B cell (primary cell): ENCODE measurements at regions of chr21 and their contacts with region 1.

Region 1: DNA sequence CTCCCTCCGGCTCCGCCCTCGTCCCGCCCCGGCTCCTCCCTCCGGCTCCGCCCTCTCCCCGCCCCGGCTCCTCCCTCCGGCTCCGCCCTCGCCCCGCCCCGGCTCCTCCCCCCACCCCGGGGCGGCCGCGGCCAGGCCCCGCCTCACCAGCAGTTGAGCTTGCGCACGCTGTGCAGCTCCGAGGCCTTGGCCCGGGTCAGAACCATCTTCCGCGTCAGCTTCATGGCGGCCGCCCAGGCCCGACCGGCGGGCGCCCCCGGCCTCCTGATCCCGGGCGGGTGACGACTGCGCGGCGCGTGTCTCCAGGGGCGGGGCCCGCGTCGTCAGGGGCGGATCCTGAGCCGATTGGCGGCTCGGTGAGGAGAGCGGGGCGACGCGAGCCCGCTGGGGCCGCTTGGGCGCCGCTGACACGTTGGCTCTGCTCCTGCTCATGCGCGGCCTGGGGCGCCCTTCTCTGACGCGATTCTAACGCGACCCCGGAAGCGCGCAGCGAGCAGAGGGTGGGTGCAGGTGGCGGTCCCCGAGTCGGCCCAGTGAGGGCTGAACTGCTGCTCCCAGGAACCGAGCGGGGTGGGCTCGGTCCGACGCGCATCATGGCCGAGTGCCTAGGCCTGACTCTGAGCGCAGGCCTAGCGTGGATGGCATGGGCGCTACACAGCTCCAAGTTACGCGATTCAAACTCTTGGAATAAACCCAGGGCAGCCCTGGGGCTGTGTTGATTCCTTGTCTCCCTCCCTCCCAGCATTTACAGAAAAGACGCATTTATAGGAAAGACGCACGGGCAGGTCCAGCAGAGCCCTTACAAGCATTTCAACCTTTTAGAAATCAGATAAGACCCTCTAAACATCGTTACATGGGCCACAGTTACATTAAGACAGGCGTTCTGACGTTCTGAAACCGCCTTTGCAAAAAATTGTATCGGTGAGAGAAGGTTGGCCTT is at the start of gene CFAP410:
- DNase-seq: peak; percentile 97
- ATAC-seq: peak; percentile 85
- H3K4me3 ChIP-seq: peak within 1 kb of the TSS; percentile 73 to 99 (median 88)
- H3K4me3 Mint-ChIP-seq: peak within 1 kb of the TSS; percentile 92
- H3K27ac ChIP-seq: peak within 1 kb of the TSS; percentile 89 to 97
- H3K27ac Mint-ChIP-seq: peak within 1 kb of the TSS; percentile 97
- H3K4me1 ChIP-seq: peaks cover 10 to 18% of the 10 kb centered on the region in 2 donors
- H3K4me1 Mint-ChIP-seq: peaks cover 17% of the 10 kb centered on the region
- H3K27me3 ChIP-seq: no peaks in the 10 kb centered on the region
- H3K27me3 Mint-ChIP-seq: no peaks in the 10 kb centered on the region
- CTCF ChIP-seq: no peak
- total RNA-seq, gene CFAP410: 62.4 and 69.2 TPM in 2 replicates

Region 2: DNA sequence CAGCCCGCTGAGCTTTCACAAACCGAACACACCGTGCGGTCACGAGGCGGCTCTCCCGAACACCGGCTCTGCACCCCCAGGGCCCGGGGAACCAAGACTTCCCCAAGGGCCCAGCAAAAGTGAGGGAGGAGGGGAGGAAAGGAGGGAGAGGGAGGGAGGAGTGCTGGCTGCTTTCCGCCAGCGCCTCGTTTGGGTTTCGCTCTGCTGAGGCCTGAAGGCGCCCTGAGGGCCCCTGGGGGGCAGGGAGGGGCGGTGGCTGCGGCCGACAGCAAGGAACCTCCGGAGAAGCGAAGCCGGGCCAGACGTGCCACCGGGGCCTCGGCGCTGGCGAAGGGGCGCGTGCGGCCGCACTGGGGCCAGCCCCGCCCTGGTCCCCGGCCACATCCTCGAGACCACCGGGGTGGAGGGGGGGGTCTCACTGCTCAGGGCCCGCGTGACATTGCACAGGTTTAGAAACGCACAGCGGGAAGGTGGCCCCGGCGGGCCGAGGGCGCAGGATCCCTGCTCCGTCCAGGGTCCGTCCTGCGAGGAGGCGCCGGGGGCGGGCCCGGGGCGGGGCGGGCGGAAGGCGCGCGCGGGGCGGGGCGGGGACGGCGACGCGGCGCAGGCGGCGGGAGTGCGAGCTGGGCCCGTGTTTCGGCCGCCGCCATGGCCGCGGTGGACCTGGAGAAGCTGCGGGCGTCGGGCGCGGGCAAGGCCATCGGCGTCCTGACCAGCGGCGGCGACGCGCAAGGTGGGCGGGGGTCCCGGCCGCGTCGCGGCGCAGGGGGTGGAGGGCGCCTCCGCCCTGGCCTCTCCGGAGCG is 39.6 kb before region 1 on chr21 and contains the start of gene PFKL:
- CTCF ChIA-PET with region 1: interaction called, 4 read pairs
- POLR2A ChIA-PET with region 1: interaction called, 7 read pairs
- intact Hi-C with region 1: loop called (anchors 1 kb)
- DNase-seq: peak; percentile 90
- ATAC-seq: peak; percentile 72
- H3K4me3 ChIP-seq: peak within 1 kb of the TSS; percentile 0 to 82 (median 72)
- H3K4me3 Mint-ChIP-seq: peak within 1 kb of the TSS; percentile 91
- H3K27ac ChIP-seq: peak within 1 kb of the TSS; percentile 91 to 94
- H3K27ac Mint-ChIP-seq: peak within 1 kb of the TSS; percentile 97
- H3K4me1 ChIP-seq: peaks cover 72 to 88% of the 10 kb centered on the region in 2 donors
- H3K4me1 Mint-ChIP-seq: peaks cover 67% of the 10 kb centered on the region
- H3K27me3 ChIP-seq: no peaks in the 10 kb centered on the region
- H3K27me3 Mint-ChIP-seq: no peaks in the 10 kb centered on the region
- CTCF ChIP-seq: no peak
- total RNA-seq, gene PFKL: 318 and 329 TPM in 2 replicates

Region 3: GRCh38 chr21:44454747-44455523 is 115.7 kb after region 1 on chr21 and contains the start of gene LRRC3:
- CTCF ChIA-PET with region 1: no interaction called
- POLR2A ChIA-PET with region 1: interaction called, 3 read pairs
- intact Hi-C with region 1: loop called (anchors 1 kb)
- DNase-seq: peak; percentile 90
- ATAC-seq: peak; percentile 86
- H3K4me3 ChIP-seq: peak within 1 kb of the TSS; percentile 45 to 76 (median 61)
- H3K4me3 Mint-ChIP-seq: peak within 1 kb of the TSS; percentile 85
- H3K27ac ChIP-seq: no peak within 1 kb of the TSS
- H3K27ac Mint-ChIP-seq: peak within 1 kb of the TSS; percentile 46
- H3K4me1 ChIP-seq: peaks cover 10 to 16% of the 10 kb centered on the region in 2 donors
- H3K4me1 Mint-ChIP-seq: peaks cover 7% of the 10 kb centered on the region
- H3K27me3 ChIP-seq: no peaks in the 10 kb centered on the region
- H3K27me3 Mint-ChIP-seq: peaks cover 7% of the 10 kb centered on the region
- CTCF ChIP-seq: no peak
- total RNA-seq, gene LRRC3: 3.3 and 3.8 TPM in 2 replicates

Region 4: GRCh38 chr21:44817506-44817880 is 478.3 kb after region 1 on chr21:
- CTCF ChIA-PET with region 1: no interaction called
- POLR2A ChIA-PET with region 1: no interaction called
- intact Hi-C with region 1: loop called (anchors 2 kb)
- DNase-seq: peak; percentile 91
- ATAC-seq: peak; percentile 95
- H3K4me3 ChIP-seq: peak overlapping the region in 4 of 5 experiments; percentile 47 to 80 (median 76)
- H3K4me3 Mint-ChIP-seq: peak overlapping the region; percentile 63
- H3K27ac ChIP-seq: no peak overlapping the region
- H3K27ac Mint-ChIP-seq: peak overlapping the region; percentile 50
- H3K4me1 ChIP-seq: peaks cover 5 to 16% of the 10 kb centered on the region in 2 donors
- H3K4me1 Mint-ChIP-seq: peaks cover 10% of the 10 kb centered on the region
- H3K27me3 ChIP-seq: no peaks in the 10 kb centered on the region
- H3K27me3 Mint-ChIP-seq: no peaks in the 10 kb centered on the region
- CTCF ChIP-seq: no peak

Region 5: GRCh38 chr21:44828362-44829056 is 489.3 kb after region 1 on chr21:
- CTCF ChIA-PET with region 1: no interaction called
- POLR2A ChIA-PET with region 1: interaction called, 12 read pairs
- intact Hi-C with region 1: no loop called
- DNase-seq: no peak
- ATAC-seq: no peak
- H3K4me3 ChIP-seq: no peak overlapping the region
- H3K4me3 Mint-ChIP-seq: no peak overlapping the region
- H3K27ac ChIP-seq: no peak overlapping the region
- H3K27ac Mint-ChIP-seq: no peak overlapping the region
- H3K4me1 ChIP-seq: peaks cover 6 to 14% of the 10 kb centered on the region in 2 donors
- H3K4me1 Mint-ChIP-seq: peaks cover 20% of the 10 kb centered on the region
- H3K27me3 ChIP-seq: peaks cover 0 to 5% (median 1%) of the 10 kb centered on the region in 4 experiments
- H3K27me3 Mint-ChIP-seq: no peaks in the 10 kb centered on the region
- CTCF ChIP-seq: no peak